GM13976 (cell line): ENCODE measurements at regions of chr13 and their contacts with region 1.

Region 1: DNA sequence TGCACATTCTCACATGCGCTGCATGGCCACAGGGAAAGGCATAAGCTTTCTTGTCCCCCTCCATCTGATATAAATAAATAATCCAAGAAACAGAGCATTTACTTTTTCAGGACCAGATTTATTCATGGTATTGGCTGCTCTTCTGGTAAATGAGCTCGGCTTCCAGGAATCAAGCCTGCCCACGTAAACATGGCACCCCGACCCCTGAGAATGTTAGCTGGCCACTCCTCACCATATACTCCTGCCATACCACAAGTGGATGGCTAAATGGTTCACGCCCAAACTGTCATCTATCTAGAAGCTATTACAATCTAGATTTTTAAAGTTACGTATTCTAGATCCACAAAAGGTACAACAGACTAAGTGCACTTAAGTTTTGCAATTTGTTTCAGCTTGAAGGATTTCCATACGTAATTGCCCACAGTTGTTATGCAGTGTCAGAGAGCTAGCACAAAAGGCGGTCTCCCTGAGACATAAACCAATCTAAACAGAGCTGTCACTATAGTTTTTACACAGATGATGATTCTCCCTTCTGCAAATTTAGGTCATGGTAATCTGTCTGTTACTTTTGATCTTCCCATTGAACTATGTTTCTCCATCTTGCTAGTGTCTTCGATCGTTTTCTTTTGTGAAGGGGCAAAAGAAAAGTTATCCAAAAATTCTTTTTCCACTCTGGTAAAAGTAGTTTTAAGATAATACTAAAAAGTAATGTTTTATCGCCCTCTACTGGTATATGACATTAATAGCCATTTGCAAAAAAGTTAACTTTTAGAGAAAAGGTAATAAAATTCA is 16.2 kb upstream of the FOXO1 start:
- DNase-seq: peak; percentile 42
- CTCF ChIP-seq: no peak

Region 2: DNA sequence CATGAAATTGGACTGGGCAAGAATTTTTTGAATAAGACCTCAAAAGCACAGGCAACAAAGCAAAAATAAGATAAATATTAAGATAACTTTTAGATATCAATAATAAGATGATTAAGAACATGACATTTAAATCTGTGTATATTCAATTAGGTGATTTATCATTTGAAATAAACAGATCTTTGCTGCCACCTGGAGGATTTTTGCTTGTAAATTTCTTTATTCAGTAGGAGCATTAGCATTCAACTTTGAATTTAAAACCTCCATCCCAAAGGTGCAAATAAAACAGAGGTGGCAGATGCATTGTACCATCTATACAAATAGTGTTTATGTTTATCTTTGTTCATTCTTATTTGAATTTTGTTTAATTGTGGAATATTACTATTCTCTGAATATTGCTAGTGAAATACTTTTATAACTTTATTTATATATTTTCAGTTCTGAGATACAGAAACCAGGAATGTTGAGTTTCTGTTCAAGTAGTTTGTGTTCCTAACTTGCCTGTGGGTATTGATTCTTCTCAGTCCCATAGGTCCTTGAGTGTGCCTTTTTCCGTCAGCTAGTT is 1006.2 kb before region 1 on chr13:
- in situ Hi-C with region 1: loop called (anchors 10 kb)
- DNase-seq: no peak
- CTCF ChIP-seq: peak; percentile 27

Region 3: DNA sequence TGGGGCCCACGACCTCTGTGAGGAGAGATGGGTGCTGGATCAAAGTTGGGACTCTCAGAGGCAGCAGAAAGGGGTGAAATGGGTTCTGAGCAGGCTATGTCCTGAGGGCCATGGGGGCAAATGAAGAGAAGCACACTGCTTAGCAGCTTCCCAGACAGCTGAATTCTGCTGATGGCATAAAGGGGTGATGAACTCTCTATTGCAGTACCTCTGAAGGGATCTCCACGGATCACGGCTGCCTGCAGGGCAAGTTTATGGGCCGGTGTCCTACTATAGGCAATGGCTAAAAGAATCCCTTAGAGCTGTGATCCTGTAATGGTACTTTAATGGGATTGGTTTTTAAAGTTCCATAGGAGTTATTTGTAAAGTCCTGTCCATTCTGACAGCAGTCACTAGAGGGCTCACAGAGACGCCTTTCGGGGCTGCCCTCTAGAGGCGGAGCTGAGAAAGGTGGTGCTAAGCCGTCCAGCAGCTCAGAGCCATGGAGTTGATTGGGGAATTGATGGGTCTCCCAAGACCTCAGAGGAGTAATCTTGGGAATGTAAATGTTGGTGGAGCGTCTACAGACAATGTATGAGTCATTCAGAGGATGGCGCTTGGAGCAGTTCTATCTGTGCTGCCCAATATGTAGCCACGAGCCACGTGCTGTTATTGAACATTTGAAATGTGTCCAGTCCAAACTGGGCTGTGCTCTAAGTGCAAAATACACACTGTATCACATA is 739.9 kb before region 1 on chr13:
- in situ Hi-C with region 1: loop called (anchors 10 kb)
- DNase-seq: peak; percentile 75
- CTCF ChIP-seq: peak; percentile 98

Region 4: DNA sequence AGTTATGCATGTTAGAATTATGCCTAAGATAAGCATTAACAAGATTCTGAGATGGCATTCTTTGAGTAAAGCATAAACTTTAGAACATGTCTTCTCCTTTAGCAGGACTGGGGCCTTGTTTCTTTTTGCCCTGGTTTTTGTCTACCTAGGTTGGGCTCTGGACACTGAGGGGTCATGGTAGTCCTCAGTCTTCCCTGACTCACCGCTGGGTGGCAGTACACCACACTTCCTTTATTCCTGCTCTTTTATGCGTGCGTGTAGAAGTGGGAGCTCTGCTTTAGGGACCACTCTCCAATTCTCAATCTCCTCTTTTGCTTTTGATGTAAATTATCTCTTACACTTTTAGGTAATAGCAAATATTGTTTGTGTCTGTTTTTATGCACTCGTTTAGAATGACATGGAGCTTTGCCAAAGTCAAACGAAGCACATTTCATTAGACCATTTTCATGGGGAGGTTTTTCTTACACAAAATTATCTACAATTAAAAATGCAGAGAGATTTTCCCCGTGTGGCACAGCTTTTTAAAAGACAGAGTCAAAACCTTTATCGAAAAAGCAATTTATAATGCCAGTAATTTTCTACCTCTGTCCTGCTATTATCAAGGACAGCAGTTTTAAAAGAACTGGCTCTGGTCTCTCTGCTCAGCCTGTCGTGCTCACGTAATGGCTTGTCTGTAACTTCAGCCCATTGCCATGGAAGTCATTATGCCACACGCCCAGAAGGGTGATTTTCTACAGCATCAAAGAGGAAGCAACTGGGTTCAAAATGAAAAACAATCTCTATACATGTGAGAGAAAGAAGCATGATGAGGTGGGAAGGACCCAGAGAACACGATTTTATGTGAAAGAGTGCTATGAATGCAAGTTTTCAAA is 613.2 kb before region 1 on chr13:
- in situ Hi-C with region 1: loop called (anchors 25 kb)
- DNase-seq: peak; percentile 56
- CTCF ChIP-seq: peak; percentile 82

Region 5: DNA sequence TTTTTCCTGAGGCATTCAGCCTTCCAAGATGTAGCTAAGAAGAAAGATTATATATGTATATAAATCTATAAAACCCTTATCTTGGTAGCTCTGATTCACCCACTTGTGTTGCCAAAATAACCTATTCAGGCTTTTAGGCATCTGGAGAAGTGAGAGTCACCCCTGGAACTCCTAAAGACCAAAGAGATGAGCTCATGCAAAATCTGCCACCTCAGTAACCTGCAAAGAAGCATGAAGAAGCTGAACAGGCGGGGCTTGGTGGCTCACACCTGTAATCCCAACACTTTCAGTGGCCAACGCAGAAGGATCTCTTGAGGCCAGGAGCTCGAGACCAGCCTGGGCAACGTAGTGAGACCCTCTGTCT is 409.9 kb before region 1 on chr13:
- in situ Hi-C with region 1: no loop called
- DNase-seq: no peak
- CTCF ChIP-seq: no peak

Region 6: DNA sequence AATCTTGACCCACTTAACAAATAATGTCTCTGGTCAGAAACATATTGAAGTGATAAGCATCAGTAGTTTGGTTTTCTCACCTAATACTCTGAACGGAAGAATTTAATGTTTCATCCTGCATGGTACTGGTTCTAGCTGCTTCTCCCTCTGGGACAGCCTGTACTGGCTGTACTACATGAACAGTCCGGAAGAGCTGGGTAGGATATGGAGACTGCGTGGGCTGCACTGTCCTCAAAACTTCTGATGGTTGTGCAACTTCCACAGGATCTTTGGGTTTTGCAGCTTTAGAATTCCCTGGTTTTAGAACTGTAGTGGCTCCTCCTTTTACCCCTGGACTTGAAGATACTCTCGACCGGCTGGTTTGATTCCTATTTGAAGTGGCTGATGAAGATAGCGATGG is 258.2 kb after region 1 on chr13:
- in situ Hi-C with region 1: no loop called
- DNase-seq: no peak
- CTCF ChIP-seq: no peak